ENCODE measurements at regions of chr20 and their contacts with region 1.

Region 1: DNA sequence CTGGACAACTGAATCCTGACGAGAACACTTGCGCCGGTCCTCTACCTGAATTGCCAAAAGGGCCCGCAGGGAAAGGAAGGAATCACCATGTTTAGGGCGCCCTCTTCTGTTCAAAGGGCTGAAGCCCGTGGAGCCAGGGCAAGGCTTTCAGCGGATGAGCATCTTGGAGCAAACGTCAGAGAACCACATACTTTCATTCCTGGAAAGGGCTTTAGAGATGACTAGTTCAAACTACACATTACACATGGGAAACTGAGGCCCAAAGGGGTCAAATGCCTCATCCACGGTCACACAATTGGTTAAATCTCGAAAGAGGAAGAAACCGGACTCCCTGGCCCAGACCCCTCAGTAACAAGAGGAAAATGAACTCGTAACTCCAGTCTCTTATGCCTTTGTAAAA is 11.5 kb upstream of the ZNF133 start:
- DNase-seq: peak; percentile 55
- ATAC-seq: peak; percentile 96
- H3K4me3 ChIP-seq: no peak overlapping the region; a peak in 1 of 4 replicates
- H3K27ac ChIP-seq: no peak overlapping the region
- H3K4me1 ChIP-seq: peaks cover 6% of the 10 kb centered on the region; the same call in 1 of the 2 replicates
- H3K27me3 ChIP-seq: peaks cover 9% of the 10 kb centered on the region; the same call in 1 of the 2 replicates
- CTCF ChIP-seq: peak; percentile 92

Region 2: GRCh38 chr20:18056174-18057100 is 220.4 kb before region 1 on chr20:
- CTCF ChIA-PET with region 1: no interaction called
- POLR2A ChIA-PET with region 1: no interaction called
- in situ Hi-C with region 1: no loop called
- intact Hi-C with region 1: loop called (anchors 10 kb)
- DNase-seq: no peak
- ATAC-seq: peak; percentile 67
- H3K4me3 ChIP-seq: peak overlapping the region; percentile 46 to 55
- H3K27ac ChIP-seq: no peak overlapping the region
- H3K4me1 ChIP-seq: peaks cover 9% of the 10 kb centered on the region
- H3K27me3 ChIP-seq: peaks cover 25% of the 10 kb centered on the region
- CTCF ChIP-seq: no peak

Region 3: DNA sequence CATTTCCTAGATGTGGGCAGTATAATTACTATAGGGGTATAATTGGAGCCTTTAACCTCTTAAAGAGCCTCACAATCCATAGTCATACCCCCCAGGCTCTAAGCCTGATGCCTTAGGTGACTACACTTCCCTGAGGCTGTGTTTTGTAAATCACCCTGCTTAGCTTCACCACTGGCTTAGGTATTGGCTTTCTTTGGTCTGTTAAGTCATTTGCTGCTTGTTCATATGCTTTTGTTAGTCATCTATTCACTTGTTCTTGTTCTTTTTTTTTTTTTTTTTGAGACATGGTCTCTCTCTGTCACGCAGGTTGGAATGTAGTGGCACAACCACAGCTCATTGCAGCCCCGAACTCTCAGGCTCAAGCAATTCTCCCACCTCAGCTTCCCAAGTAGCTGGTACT is 112.5 kb before region 1 on chr20:
- CTCF ChIA-PET with region 1: no interaction called
- POLR2A ChIA-PET with region 1: no interaction called
- in situ Hi-C with region 1: no loop called
- intact Hi-C with region 1: loop called (anchors 10 kb)
- DNase-seq: no peak
- ATAC-seq: no peak
- H3K4me3 ChIP-seq: no peak overlapping the region
- H3K27ac ChIP-seq: no peak overlapping the region
- H3K4me1 ChIP-seq: no peaks in the 10 kb centered on the region
- H3K27me3 ChIP-seq: no peaks in the 10 kb centered on the region
- CTCF ChIP-seq: no peak